IMR-90 (cell line): ENCODE measurements at regions of chr7 and their contacts with region 1.

Region 1: DNA sequence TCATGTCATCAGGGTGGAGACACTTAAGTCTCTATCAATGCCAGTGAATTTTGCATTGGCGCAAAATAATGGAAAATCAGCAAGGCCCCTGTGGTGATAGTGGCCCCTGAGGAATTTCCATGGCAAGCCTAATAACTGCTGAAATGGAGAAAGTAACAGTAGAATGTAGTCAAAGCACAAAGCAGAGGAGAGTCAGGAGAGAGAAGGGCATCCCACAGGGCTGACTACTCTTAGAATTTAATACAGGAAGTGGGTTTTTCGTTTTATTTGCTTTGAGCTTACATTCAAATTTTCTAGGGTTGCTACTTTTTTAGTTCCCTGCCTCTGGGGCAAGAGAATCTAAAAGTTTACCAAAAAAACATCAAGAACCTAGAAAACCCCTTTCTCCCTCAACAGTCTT is 39.0 kb downstream of the BZW2 start:
- DNase-seq: no peak
- ATAC-seq: peak; percentile 57
- H3K4me3 ChIP-seq: no peak overlapping the region
- H3K27ac ChIP-seq: peak overlapping the region; percentile 67; the same call in 1 of the 2 replicates
- H3K4me1 ChIP-seq: peaks cover 6% of the 10 kb centered on the region
- H3K27me3 ChIP-seq: no peaks in the 10 kb centered on the region
- CTCF ChIP-seq: no peak
- POLR2A ChIP-seq: no peak
- RAD21 ChIP-seq: no peak

Region 2: GRCh38 chr7:16634271-16634738 is 50.6 kb before region 1 on chr7:
- CTCF ChIA-PET with region 1: no interaction called
- POLR2A ChIA-PET with region 1: no interaction called
- dilution Hi-C with region 1: no loop called
- in situ Hi-C with region 1: no loop called
- intact Hi-C with region 1: no loop called
- DNase-seq: no peak
- ATAC-seq: no peak
- H3K4me3 ChIP-seq: no peak overlapping the region
- H3K27ac ChIP-seq: no peak overlapping the region
- H3K4me1 ChIP-seq: peaks cover 3% of the 10 kb centered on the region; the same call in 1 of the 2 replicates
- H3K27me3 ChIP-seq: no peaks in the 10 kb centered on the region
- CTCF ChIP-seq: no peak
- POLR2A ChIP-seq: no peak
- RAD21 ChIP-seq: no peak

Region 3: DNA sequence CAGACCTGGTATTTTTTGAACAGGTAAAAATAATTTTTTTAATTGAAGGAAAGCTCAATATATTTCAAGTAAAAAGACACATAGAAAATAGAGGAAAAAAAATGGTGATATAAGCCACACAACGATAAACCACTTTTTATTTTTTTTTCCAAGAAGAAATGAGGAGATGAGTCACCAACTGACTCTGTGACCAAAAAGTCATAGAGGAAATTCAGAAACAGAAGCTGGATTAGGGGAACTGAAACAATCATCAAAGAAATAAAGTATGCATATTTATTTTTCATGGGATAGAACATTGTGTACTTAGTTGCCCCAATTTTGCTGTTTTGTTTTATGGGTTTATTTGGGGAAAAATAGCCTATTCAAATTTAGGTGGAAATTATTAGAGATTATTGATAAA is 373.6 kb after region 1 on chr7:
- CTCF ChIA-PET with region 1: no interaction called
- POLR2A ChIA-PET with region 1: no interaction called
- dilution Hi-C with region 1: no loop called
- in situ Hi-C with region 1: no loop called
- intact Hi-C with region 1: no loop called
- DNase-seq: peak; percentile 55
- ATAC-seq: no peak
- H3K4me3 ChIP-seq: no peak overlapping the region
- H3K27ac ChIP-seq: no peak overlapping the region
- H3K4me1 ChIP-seq: no peaks in the 10 kb centered on the region
- H3K27me3 ChIP-seq: no peaks in the 10 kb centered on the region
- CTCF ChIP-seq: no peak
- POLR2A ChIP-seq: no peak
- RAD21 ChIP-seq: no peak

Region 4: GRCh38 chr7:17144322-17144721 is 459.4 kb after region 1 on chr7:
- CTCF ChIA-PET with region 1: no interaction called
- POLR2A ChIA-PET with region 1: no interaction called
- dilution Hi-C with region 1: no loop called
- in situ Hi-C with region 1: no loop called
- intact Hi-C with region 1: no loop called
- DNase-seq: peak; percentile 46
- ATAC-seq: peak; percentile 44; the same call in 1 of the 2 replicates
- H3K4me3 ChIP-seq: no peak overlapping the region
- H3K27ac ChIP-seq: no peak overlapping the region
- H3K4me1 ChIP-seq: peaks cover 8% of the 10 kb centered on the region
- H3K27me3 ChIP-seq: no peaks in the 10 kb centered on the region
- CTCF ChIP-seq: no peak
- POLR2A ChIP-seq: no peak
- RAD21 ChIP-seq: no peak

Region 5: DNA sequence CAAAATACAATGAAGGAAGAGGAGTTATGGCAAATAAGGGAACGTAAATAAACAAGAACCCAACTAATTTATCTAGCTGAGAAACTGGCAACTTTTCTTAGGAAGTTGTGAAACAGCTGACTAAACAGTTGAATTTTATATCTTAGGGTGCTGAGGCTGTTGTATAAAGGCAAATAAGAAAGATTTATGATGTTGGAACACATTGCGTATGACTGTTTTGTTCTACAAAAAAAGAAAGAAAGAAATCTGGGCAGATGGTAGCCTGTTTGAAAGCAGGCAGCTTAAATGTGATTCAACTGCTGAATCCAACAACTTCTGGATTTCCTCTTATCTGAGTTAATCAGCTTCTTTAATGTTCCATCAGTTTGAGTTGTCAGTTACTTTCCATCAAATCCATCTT is 1040.9 kb after region 1 on chr7:
- CTCF ChIA-PET with region 1: no interaction called
- POLR2A ChIA-PET with region 1: interaction called, 10 read pairs
- dilution Hi-C with region 1: no loop called
- in situ Hi-C with region 1: no loop called
- intact Hi-C with region 1: no loop called
- DNase-seq: no peak
- ATAC-seq: no peak
- H3K4me3 ChIP-seq: no peak overlapping the region
- H3K27ac ChIP-seq: no peak overlapping the region
- H3K4me1 ChIP-seq: no peaks in the 10 kb centered on the region
- H3K27me3 ChIP-seq: peaks cover 5% of the 10 kb centered on the region; the same call in 1 of the 2 replicates
- CTCF ChIP-seq: no peak
- POLR2A ChIP-seq: no peak
- RAD21 ChIP-seq: no peak